MCF 10A (cell line): ENCODE measurements at regions of chr12 and their contacts with region 1.

Region 1: GRCh38 chr12:52454411-52455216 is 2.7 kb upstream of the KRT6B start:
- DNase-seq: peak; percentile 60
- H3K4me3 Mint-ChIP-seq: no peak overlapping the region
- H3K27ac Mint-ChIP-seq: no peak overlapping the region
- H3K4me1 Mint-ChIP-seq: peaks cover 29% of the 10 kb centered on the region
- H3K27me3 Mint-ChIP-seq: no peaks in the 10 kb centered on the region
- CTCF ChIP-seq: no peak

Region 2: DNA sequence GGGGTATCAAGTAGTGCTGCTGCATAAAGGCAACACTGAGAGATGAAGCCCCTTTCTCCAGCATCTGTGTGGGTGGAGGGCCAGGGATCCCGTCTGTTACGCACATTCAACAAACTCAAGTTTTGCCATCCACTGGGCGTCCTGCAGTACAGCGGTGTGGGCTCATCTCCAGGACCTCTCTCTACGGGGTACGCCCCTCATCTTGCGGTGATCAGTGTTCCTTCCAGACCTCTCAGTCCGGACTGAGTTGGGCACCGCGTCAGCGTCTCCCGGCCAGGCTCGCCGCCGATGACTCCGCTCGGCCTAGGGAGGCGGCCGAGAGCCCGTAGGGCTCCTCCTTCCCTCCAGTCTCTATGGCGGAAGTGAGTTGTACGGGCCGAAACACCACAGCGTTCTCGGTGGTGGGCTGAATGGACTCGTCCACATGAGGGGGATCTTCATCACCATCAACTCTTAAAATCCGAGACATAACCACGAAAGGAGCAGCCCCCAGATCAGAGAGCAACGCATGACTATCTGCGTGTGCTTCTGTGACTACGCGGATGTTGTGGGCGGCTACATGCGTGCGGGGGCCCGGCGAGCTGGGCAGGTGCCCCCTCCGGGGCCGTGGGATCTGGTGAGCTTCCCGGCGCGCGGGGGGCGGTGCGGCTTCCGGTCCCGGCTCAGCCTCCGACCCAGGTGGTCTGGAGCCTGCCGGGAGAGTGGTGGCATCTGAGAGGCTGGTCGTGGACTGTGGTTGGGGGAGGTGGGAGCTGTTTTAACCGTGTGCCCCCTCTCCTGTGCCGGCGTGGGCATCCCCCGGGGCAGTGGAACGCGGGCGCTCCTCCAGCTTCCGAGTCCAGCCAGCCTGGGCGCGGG is 385.1 kb before region 1 on chr12 and contains the start of gene ATG101:
- CTCF ChIA-PET with region 1: no interaction called
- POLR2A ChIA-PET with region 1: no interaction called
- intact Hi-C with region 1: no loop called
- DNase-seq: peak; percentile 95
- H3K4me3 Mint-ChIP-seq: peak within 1 kb of the TSS; percentile 96
- H3K27ac Mint-ChIP-seq: peak within 1 kb of the TSS; percentile 99
- H3K4me1 Mint-ChIP-seq: peaks cover 22% of the 10 kb centered on the region
- H3K27me3 Mint-ChIP-seq: peaks cover 20% of the 10 kb centered on the region
- CTCF ChIP-seq: peak; percentile 41
- total RNA-seq, gene ATG101: 64.2 and 66.9 TPM in 2 replicates

Region 3: DNA sequence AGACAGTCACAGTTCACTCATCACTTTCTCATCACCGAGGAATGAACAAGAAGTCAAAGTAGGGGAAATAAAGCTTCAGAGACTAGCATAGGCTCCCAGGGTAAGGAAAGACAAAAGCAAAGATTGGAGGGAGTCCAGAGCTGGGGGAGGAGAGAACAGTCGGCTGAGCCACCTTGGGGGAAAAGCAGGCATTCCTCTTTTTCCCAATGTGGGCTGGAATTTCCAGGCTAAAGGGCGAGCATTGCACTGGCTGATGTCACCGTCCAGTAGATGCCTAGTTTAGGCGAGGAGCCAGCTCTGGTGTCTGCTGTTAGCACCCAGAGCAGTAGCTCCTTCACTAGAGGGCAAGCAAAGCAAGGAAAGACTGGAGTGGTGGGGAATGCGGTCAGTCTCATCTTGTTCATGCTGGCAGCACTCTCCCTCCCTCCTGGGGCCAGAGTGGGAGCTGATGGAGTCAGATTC is 12.0 kb before region 1 on chr12:
- CTCF ChIA-PET with region 1: no interaction called
- POLR2A ChIA-PET with region 1: interaction called, 12 read pairs
- intact Hi-C with region 1: no loop called
- DNase-seq: peak; percentile 98
- H3K4me3 Mint-ChIP-seq: no peak overlapping the region
- H3K27ac Mint-ChIP-seq: no peak overlapping the region
- H3K4me1 Mint-ChIP-seq: peaks cover 35% of the 10 kb centered on the region
- H3K27me3 Mint-ChIP-seq: no peaks in the 10 kb centered on the region
- CTCF ChIP-seq: no peak

Region 4: GRCh38 chr12:52473768-52474167 is 19.2 kb after region 1 on chr12 and contains the start of gene KRT6C:
- CTCF ChIA-PET with region 1: no interaction called
- POLR2A ChIA-PET with region 1: interaction called, 5 read pairs
- intact Hi-C with region 1: loop called (anchors 2 kb)
- DNase-seq: peak; percentile 43
- H3K4me3 Mint-ChIP-seq: no peak within 1 kb of the TSS
- H3K27ac Mint-ChIP-seq: no peak within 1 kb of the TSS
- H3K4me1 Mint-ChIP-seq: no peaks in the 10 kb centered on the region
- H3K27me3 Mint-ChIP-seq: no peaks in the 10 kb centered on the region
- CTCF ChIP-seq: no peak
- total RNA-seq, gene KRT6C: 0.19 and 0.44 TPM in 2 replicates

Region 5: DNA sequence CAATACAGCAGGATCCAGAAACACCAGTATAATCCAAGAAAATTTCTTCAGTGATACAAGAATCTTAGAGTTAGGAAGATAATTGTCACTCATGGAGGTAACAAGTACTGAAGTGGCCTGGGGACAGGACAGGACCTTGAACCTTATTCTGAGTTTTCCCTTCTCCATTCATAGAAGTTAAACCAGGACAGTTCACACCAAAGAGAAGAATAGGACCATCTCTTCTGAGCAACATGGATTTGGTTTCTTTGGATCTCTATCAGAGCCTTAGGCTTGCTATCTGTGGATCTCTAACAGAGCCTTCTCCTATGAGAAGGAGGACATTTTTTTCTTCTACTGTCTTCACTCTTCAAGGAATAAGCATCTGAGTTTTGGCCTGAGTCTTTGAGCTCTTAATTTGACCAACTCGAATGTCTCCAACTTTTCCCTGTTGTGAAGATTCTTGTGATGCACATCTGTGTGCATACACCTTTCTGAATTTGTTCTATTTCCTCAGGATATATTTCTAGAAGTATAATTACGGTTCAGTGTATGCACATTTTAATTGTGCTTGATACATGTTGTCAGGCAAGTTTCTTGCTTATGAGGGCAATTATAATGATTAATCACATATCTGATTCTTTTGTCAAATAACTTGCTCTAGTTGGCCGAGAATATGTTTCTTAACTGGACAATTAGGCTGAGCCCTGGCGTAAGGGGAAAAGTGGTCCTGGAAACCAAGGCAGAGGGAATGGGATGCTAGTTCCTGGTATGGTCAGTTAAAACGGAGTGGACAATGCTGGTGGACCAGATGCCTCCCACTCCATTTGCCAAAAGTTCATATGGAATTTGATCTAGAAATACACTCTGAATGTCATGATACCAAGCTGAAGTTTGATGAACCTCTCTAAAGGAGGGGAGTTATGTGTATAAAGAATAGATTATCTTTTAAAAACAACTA is 31.8 kb after region 1 on chr12:
- CTCF ChIA-PET with region 1: no interaction called
- POLR2A ChIA-PET with region 1: interaction called, 14 read pairs
- intact Hi-C with region 1: no loop called
- DNase-seq: peak; percentile 29
- H3K4me3 Mint-ChIP-seq: peak overlapping the region; percentile 21
- H3K27ac Mint-ChIP-seq: peak overlapping the region; percentile 50
- H3K4me1 Mint-ChIP-seq: peaks cover 19% of the 10 kb centered on the region
- H3K27me3 Mint-ChIP-seq: no peaks in the 10 kb centered on the region
- CTCF ChIP-seq: no peak

Region 6: DNA sequence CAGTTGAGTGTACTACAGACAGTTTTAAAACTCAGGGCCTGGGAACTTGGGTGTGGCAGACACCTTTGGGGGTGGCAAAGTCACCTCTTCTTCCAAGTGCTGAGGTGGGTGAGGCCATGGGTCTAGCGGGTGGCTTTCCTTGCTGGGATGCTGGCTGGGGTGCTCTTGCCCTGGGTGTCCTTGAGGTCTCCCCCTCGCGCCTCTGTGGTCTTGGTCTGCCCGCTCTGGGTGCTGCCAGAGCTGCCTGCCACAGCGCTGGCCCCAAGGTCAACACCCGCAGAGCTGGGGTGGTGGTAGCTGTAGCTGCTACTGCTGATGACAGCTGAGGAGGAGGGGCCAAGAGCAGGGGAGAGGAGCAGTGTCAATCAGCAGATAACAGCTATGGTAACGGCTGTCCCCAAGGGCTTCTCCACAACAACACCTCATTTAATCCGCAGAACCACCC is 112.3 kb after region 1 on chr12:
- CTCF ChIA-PET with region 1: no interaction called
- POLR2A ChIA-PET with region 1: no interaction called
- intact Hi-C with region 1: no loop called
- DNase-seq: no peak
- H3K4me3 Mint-ChIP-seq: no peak overlapping the region
- H3K27ac Mint-ChIP-seq: no peak overlapping the region
- H3K4me1 Mint-ChIP-seq: no peaks in the 10 kb centered on the region
- H3K27me3 Mint-ChIP-seq: no peaks in the 10 kb centered on the region
- CTCF ChIP-seq: no peak